Stomach (tissue), 19 donors: ENCODE measurements at regions of chr7 and their contacts with region 1.

Region 1: GRCh38 chr7:30800785-30801252 is 29.6 kb downstream of the MINDY4 start:
- DNase-seq: peak; percentile 52 to 91
- H3K4me3 ChIP-seq: no peak overlapping the region
- H3K27ac ChIP-seq: peak overlapping the region in 2 of 5 donors; percentile 22 to 67
- H3K4me1 ChIP-seq: peaks cover 0 to 69% (median 47%) of the 10 kb centered on the region in 4 donors
- H3K27me3 ChIP-seq: no peaks in the 10 kb centered on the region
- CTCF ChIP-seq: peak in 5 of 7 experiments; percentile 36 to 69 (median 57)
- EP300 ChIP-seq: no peak
- POLR2A ChIP-seq: no peak

Region 2: GRCh38 chr7:30688718-30689221 is 112.0 kb before region 1 on chr7:
- intact Hi-C with region 1: no loop called
- DNase-seq: peak in 1 of 2 donors; percentile 88
- H3K4me3 ChIP-seq: no peak overlapping the region
- H3K27ac ChIP-seq: no peak overlapping the region
- H3K4me1 ChIP-seq: peaks cover 0 to 7% (median 2%) of the 10 kb centered on the region in 4 donors
- H3K27me3 ChIP-seq: peaks cover 0 to 18% (median 8%) of the 10 kb centered on the region in 3 donors
- CTCF ChIP-seq: no peak
- EP300 ChIP-seq: no peak
- POLR2A ChIP-seq: no peak

Region 3: GRCh38 chr7:30974605-30975255 is 173.9 kb after region 1 on chr7:
- intact Hi-C with region 1: loop called (anchors 5 kb)
- DNase-seq: peak; percentile 57 to 89
- H3K4me3 ChIP-seq: no peak overlapping the region
- H3K27ac ChIP-seq: no peak overlapping the region
- H3K4me1 ChIP-seq: peaks cover 0 to 9% (median 3%) of the 10 kb centered on the region in 4 donors
- H3K27me3 ChIP-seq: peaks cover 0 to 36% (median 0%) of the 10 kb centered on the region in 3 donors
- CTCF ChIP-seq: peak in 5 of 7 experiments; percentile 33 to 68 (median 60)
- EP300 ChIP-seq: no peak
- POLR2A ChIP-seq: no peak